IMR-90 (cell line): ENCODE measurements at regions of chr2 and their contacts with region 1.

Region 1: GRCh38 chr2:158099716-158100115 is 2.0 kb upstream of the UPP2 start:
- DNase-seq: peak; percentile 4
- ATAC-seq: no peak
- H3K4me3 ChIP-seq: no peak overlapping the region
- H3K27ac ChIP-seq: no peak overlapping the region
- H3K4me1 ChIP-seq: no peaks in the 10 kb centered on the region
- H3K27me3 ChIP-seq: no peaks in the 10 kb centered on the region
- CTCF ChIP-seq: no peak
- POLR2A ChIP-seq: no peak
- RAD21 ChIP-seq: no peak

Region 2: DNA sequence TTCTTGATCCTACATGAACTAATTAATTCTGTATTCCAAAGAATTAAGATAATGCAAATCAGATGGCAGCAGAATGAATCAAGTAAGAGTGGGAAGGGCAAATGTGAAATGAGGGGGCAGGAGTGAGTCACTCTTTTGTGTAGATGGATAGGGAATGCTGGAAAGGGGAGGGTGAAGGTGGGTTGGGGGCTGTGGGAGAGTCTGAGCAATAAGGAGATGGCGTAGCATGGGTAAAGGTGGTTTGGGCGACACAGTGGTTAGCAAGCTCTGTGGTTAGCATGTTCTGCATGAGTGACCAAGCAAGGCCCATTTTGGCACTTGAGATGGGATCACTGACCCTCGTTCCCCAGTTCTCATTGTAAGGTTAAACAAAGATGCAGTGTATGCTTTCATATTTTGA is 1643.1 kb before region 1 on chr2:
- CTCF ChIA-PET with region 1: no interaction called
- POLR2A ChIA-PET with region 1: interaction called, 10 read pairs
- dilution Hi-C with region 1: no loop called
- in situ Hi-C with region 1: no loop called
- intact Hi-C with region 1: no loop called
- DNase-seq: peak; percentile 51
- ATAC-seq: no peak
- H3K4me3 ChIP-seq: no peak overlapping the region
- H3K27ac ChIP-seq: no peak overlapping the region
- H3K4me1 ChIP-seq: peaks cover 7% of the 10 kb centered on the region
- H3K27me3 ChIP-seq: no peaks in the 10 kb centered on the region
- CTCF ChIP-seq: no peak
- POLR2A ChIP-seq: no peak
- RAD21 ChIP-seq: no peak